ENCODE measurements at regions of chr2 and their contacts with region 1.

Region 1: GRCh38 chr2:238288650-238289573 is 502 bp upstream of the PER2 start:
- DNase-seq: peak; percentile 99
- H3K4me3 Mint-ChIP-seq: peak overlapping the region; percentile 93
- H3K27ac Mint-ChIP-seq: peak overlapping the region; percentile 99
- H3K4me1 Mint-ChIP-seq: peaks cover 25% of the 10 kb centered on the region
- H3K27me3 Mint-ChIP-seq: no peaks in the 10 kb centered on the region

Region 2: DNA sequence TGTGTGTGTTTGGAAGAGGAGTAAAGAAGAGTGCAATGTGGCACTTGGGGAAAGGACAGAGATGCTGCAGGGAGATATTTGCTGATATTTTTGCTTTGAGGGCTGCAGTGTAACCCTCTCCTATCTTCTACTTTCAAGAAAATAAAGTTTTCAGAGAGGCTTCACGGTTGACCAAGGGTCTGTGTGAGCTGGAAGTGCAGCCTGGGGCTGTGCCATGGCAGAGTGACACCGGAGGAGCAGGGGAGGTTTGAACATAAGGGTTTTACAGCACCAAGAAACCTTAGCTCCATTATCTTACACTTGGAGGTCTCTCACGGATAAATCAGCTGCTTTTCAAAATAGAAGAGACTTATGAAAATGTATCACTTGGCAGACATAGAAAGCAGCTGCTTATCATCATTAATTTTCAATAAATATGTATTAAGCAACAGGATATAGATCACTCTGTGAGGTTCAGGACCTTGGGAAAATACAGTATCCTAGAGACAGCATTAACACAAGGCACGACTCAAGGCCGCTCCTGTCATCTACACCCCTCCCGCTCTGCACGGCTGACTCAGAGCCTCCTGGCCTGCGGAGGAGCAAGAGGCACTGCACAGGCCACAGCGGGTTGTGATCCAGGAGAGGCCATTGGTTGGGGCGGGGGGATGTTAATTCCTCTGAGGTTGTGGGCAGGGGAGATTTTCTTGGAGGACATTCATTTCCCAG is 1075.4 kb before region 1 on chr2:
- intact Hi-C with region 1: no loop called
- DNase-seq: no peak
- H3K4me3 Mint-ChIP-seq: no peak overlapping the region
- H3K27ac Mint-ChIP-seq: no peak overlapping the region
- H3K4me1 Mint-ChIP-seq: no peaks in the 10 kb centered on the region
- H3K27me3 Mint-ChIP-seq: no peaks in the 10 kb centered on the region

Region 3: GRCh38 chr2:238320246-238320647 is 31.3 kb after region 1 on chr2 and contains the start of gene TRAF3IP1:
- intact Hi-C with region 1: loop called (anchors 1 kb)
- DNase-seq: peak; percentile 97
- H3K4me3 Mint-ChIP-seq: peak within 1 kb of the TSS; percentile 76
- H3K27ac Mint-ChIP-seq: no peak within 1 kb of the TSS
- H3K4me1 Mint-ChIP-seq: peaks cover 10% of the 10 kb centered on the region
- H3K27me3 Mint-ChIP-seq: peaks cover 18% of the 10 kb centered on the region
- total RNA-seq, gene TRAF3IP1: 11.0 and 12.7 TPM in 2 replicates

Region 4: GRCh38 chr2:238426568-238427434 is 137.9 kb after region 1 on chr2 and contains the start of gene ASB1:
- intact Hi-C with region 1: loop called (anchors 2 kb)
- DNase-seq: peak; percentile 95
- H3K4me3 Mint-ChIP-seq: peak within 1 kb of the TSS; percentile 91
- H3K27ac Mint-ChIP-seq: peak within 1 kb of the TSS; percentile 93
- H3K4me1 Mint-ChIP-seq: peaks cover 33% of the 10 kb centered on the region
- H3K27me3 Mint-ChIP-seq: no peaks in the 10 kb centered on the region
- total RNA-seq, gene ASB1: 33.9 and 34.8 TPM in 2 replicates

Region 5: DNA sequence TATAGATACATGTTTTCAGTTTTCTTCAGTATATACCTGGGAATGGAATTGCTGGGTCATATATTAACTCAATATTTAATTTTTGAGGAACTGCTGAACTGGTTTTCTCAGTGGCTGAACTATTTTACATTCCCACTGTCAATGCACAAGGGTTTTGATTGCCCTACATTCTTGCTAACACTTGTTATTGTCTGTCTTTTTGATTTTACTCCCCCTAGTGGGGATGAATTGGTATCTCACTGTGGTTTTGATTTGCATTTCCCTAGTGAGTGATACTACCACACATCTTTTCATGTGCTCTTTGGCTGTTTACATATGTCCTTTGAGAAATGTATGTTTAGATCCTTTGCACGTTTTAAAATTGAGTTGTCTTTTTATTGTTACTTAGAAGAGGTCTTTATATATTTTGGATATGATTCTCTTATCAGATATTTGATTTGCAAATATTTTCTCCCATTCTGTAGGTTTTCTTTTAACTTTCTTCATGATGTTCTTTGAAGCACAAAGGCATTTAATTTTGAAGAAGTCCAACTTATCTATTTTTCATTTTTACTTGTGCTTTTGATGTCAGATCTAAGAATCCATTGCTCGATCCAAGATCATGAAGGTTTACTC is 174.0 kb after region 1 on chr2:
- intact Hi-C with region 1: no loop called
- DNase-seq: peak; percentile 77
- H3K4me3 Mint-ChIP-seq: no peak overlapping the region
- H3K27ac Mint-ChIP-seq: no peak overlapping the region
- H3K4me1 Mint-ChIP-seq: no peaks in the 10 kb centered on the region
- H3K27me3 Mint-ChIP-seq: no peaks in the 10 kb centered on the region

Measured in activated CD4-positive, alpha-beta T cell treated with anti-CD3 and anti-CD28 coated beads, Interleukin-2, amount 10 ng/mL, durations not matched to agents 24 days and 14 days (primary cell).